Breast epithelium (tissue), 4 donors: ENCODE measurements at regions of chr4 and their contacts with region 1.

Region 1: GRCh38 chr4:42904986-42905385 is 12.5 kb downstream of the GRXCR1 start:
- DNase-seq: peak in 1 of 2 donors; percentile 54
- H3K4me3 ChIP-seq: no peak overlapping the region
- H3K27ac ChIP-seq: no peak overlapping the region
- H3K4me1 ChIP-seq: no peaks in the 10 kb centered on the region
- H3K27me3 ChIP-seq: no peaks in the 10 kb centered on the region
- CTCF ChIP-seq: no peak
- POLR2A ChIP-seq: no peak

Region 2: DNA sequence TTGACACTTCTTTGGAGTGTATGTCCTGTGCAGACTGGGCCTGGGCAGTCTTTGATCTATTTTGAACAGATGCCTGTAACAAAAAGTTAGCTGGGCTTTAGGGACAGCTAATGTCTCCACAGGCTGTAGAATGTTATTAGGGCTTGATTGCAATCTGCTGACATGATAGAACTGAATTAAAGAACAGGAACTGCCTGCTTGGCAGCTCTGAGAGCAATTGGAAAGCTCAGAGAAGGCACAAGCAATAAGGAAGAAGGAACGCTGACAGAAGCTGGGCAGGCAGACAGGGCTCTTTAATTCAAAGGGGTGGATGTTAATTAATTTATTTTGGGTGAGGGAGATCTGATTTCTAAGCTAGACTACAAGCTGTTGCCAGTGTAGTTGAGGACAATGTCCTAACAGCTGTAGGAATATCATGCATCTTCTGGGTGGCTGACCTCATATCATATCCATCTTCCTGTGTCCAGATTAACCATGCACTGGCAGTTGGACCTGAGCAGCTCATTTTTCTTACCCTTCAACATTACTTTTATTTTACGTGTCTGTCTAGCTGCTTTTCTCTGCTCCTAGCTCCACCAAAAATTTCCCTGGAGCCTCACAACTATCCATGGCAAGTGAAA is 33.2 kb before region 1 on chr4:
- intact Hi-C with region 1: loop called (anchors 1 kb)
- DNase-seq: no peak
- H3K4me3 ChIP-seq: no peak overlapping the region
- H3K27ac ChIP-seq: no peak overlapping the region
- H3K4me1 ChIP-seq: no peaks in the 10 kb centered on the region
- H3K27me3 ChIP-seq: peaks cover 0 to 5% of the 10 kb centered on the region in 2 donors
- CTCF ChIP-seq: no peak
- POLR2A ChIP-seq: no peak

Region 3: GRCh38 chr4:42891644-42892043 is 13.3 kb before region 1 on chr4:
- intact Hi-C with region 1: no loop called
- DNase-seq: no peak
- H3K4me3 ChIP-seq: no peak overlapping the region
- H3K27ac ChIP-seq: no peak overlapping the region
- H3K4me1 ChIP-seq: no peaks in the 10 kb centered on the region
- H3K27me3 ChIP-seq: no peaks in the 10 kb centered on the region
- CTCF ChIP-seq: no peak
- POLR2A ChIP-seq: no peak